ENCODE measurements at regions of chr2 and their contacts with region 1.

Region 1: GRCh38 chr2:25664183-25664964 is 9.0 kb downstream of the DTNB start:
- DNase-seq: peak; percentile 83 to 91
- ATAC-seq: peak; percentile 99 to 100
- H3K4me3 ChIP-seq: no peak overlapping the region
- H3K27ac ChIP-seq: peak overlapping the region; percentile 8 to 69; a peak in 4 of 6 replicates
- H3K4me1 ChIP-seq: peaks cover 13% of the 10 kb centered on the region
- CTCF ChIP-seq: peak; percentile 96
- EP300 ChIP-seq: no peak
- POLR2A ChIP-seq: no peak
- RAD21 ChIP-seq: peak; percentile 96 to 99

Region 2: DNA sequence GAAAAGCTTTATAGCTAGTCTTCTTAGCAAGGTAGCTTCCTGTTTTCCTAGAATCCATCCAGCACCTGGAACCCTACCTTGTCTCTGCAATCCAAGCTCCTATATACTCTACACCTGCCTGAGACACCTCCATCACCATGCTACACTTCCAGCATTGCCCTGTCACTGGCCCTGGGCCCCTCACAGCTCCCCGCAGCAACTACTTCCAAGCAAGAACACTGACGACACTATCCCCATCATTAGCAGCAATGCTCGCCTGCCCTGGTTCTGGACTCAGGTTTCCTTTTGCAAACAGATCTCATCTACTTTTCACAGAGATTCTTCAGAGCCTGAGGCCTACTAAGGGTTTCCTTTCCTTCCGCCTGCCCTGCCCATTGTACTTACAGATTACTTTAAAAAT is 112.1 kb before region 1 on chr2:
- CTCF ChIA-PET with region 1: interaction called, 14 read pairs
- POLR2A ChIA-PET with region 1: no interaction called
- DNase-seq: no peak
- ATAC-seq: no peak
- H3K4me3 ChIP-seq: no peak overlapping the region
- H3K27ac ChIP-seq: no peak overlapping the region
- H3K4me1 ChIP-seq: no peaks in the 10 kb centered on the region
- CTCF ChIP-seq: no peak
- EP300 ChIP-seq: no peak
- POLR2A ChIP-seq: 0 out of 2 replicates have a peak, but pooled peaks have one; percentile 12
- RAD21 ChIP-seq: no peak

Region 3: DNA sequence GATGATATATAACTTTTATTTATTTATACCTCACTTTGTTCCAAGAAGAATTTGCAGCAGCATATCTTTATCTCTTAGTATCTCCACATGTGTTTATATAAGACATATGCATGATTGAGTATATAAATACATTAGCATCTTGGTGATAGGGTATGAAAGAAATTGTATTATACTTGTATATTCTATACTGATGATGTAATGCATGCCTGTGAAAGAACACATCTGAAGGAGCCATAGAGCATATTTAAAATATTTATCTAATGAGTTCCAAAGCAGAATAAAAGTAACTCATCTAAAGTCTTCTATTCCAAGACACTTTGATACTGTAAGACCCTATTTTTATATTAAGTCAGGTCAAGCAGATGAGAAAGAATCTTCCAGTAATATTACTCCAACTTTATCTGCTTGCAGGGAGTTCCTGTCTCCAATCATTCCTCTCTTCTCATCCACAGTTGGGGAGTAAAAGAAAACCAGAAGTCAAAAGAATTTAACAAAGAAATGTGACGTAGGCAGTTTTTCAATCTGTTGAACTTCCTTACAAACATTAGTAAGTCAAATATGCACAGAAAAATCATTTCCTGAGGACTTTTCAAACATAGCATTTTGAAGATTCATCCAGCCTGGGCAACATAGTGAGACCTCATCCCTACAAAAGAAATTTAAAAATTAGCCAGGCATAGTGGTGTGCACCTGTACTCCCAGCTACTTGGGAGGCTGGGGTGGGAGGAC is 67.7 kb before region 1 on chr2:
- CTCF ChIA-PET with region 1: interaction called, 41 read pairs
- POLR2A ChIA-PET with region 1: no interaction called
- DNase-seq: no peak
- ATAC-seq: no peak
- H3K4me3 ChIP-seq: no peak overlapping the region
- H3K27ac ChIP-seq: no peak overlapping the region
- H3K4me1 ChIP-seq: no peaks in the 10 kb centered on the region
- CTCF ChIP-seq: no peak
- EP300 ChIP-seq: no peak
- POLR2A ChIP-seq: no peak
- RAD21 ChIP-seq: no peak

Region 4: GRCh38 chr2:25632396-25632795 is 32.0 kb before region 1 on chr2:
- CTCF ChIA-PET with region 1: interaction called, 15 read pairs
- POLR2A ChIA-PET with region 1: no interaction called
- DNase-seq: no peak
- ATAC-seq: peak in 1 of 2 experiments; percentile 34; a peak in 2 of 6 replicates
- H3K4me3 ChIP-seq: no peak overlapping the region
- H3K27ac ChIP-seq: no peak overlapping the region
- H3K4me1 ChIP-seq: peaks cover 9% of the 10 kb centered on the region; the same call in 2 of the 3 replicates
- CTCF ChIP-seq: no peak
- EP300 ChIP-seq: no peak
- POLR2A ChIP-seq: no peak
- RAD21 ChIP-seq: no peak

Region 5: GRCh38 chr2:25651071-25651470 is 13.3 kb before region 1 on chr2:
- CTCF ChIA-PET with region 1: interaction called, 62 read pairs
- POLR2A ChIA-PET with region 1: no interaction called
- DNase-seq: no peak
- ATAC-seq: no peak
- H3K4me3 ChIP-seq: no peak overlapping the region
- H3K27ac ChIP-seq: no peak overlapping the region
- H3K4me1 ChIP-seq: 0 out of 3 replicates have a peak, but pooled peaks cover 7% of the 10 kb centered on the region
- CTCF ChIP-seq: no peak
- EP300 ChIP-seq: no peak
- POLR2A ChIP-seq: no peak
- RAD21 ChIP-seq: no peak

Region 6: GRCh38 chr2:25700221-25700660 is 35.9 kb after region 1 on chr2:
- CTCF ChIA-PET with region 1: interaction called, 61 read pairs
- POLR2A ChIA-PET with region 1: no interaction called
- DNase-seq: peak; percentile 55 to 70
- ATAC-seq: peak; percentile 75 to 82
- H3K4me3 ChIP-seq: no peak overlapping the region
- H3K27ac ChIP-seq: no peak overlapping the region
- H3K4me1 ChIP-seq: peaks cover 13% of the 10 kb centered on the region; the same call in 1 of the 3 replicates
- CTCF ChIP-seq: peak; percentile 68
- EP300 ChIP-seq: no peak
- POLR2A ChIP-seq: no peak
- RAD21 ChIP-seq: peak; percentile 63 to 77

Region 7: DNA sequence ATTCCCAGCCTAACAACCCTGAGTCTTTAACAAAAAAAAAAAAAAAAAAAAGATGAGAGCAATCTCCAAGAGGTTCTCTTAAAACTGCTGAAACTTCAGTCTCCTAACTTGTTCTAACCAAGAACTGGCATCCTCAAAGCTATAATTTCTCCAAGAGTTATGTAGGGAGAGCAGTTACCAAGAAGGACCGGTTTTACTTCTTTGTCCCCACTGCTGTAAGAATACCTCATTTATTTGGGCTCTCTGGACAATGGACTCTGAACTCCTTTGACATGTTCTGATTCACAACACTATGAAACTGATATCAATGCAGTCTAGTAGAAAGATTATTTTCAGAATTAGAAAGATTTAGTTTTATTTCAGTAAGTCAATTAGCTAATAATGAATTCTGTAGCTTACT is 93.5 kb after region 1 on chr2:
- CTCF ChIA-PET with region 1: no interaction called
- POLR2A ChIA-PET with region 1: no interaction called
- DNase-seq: no peak
- ATAC-seq: no peak
- H3K4me3 ChIP-seq: no peak overlapping the region
- H3K27ac ChIP-seq: no peak overlapping the region
- H3K4me1 ChIP-seq: no peaks in the 10 kb centered on the region
- CTCF ChIP-seq: no peak
- EP300 ChIP-seq: no peak
- POLR2A ChIP-seq: no peak
- RAD21 ChIP-seq: no peak

Region 8: GRCh38 chr2:25894135-25894830 is 229.9 kb after region 1 on chr2:
- CTCF ChIA-PET with region 1: no interaction called
- POLR2A ChIA-PET with region 1: no interaction called
- DNase-seq: no peak
- ATAC-seq: peak in 1 of 2 experiments; percentile 46; a peak in 3 of 6 replicates
- H3K4me3 ChIP-seq: no peak overlapping the region
- H3K27ac ChIP-seq: no peak overlapping the region
- H3K4me1 ChIP-seq: no peaks in the 10 kb centered on the region
- CTCF ChIP-seq: no peak
- EP300 ChIP-seq: no peak
- POLR2A ChIP-seq: no peak
- RAD21 ChIP-seq: no peak